ENCODE measurements at regions of chr22 and their contacts with region 1.

Region 1: GRCh38 chr22:39170825-39171622 is 18.5 kb upstream of the CBX7 start:
- DNase-seq: peak; percentile 89
- H3K4me3 Mint-ChIP-seq: peak overlapping the region; percentile 60
- H3K27ac Mint-ChIP-seq: peak overlapping the region; percentile 57
- H3K4me1 Mint-ChIP-seq: peaks cover 37% of the 10 kb centered on the region
- H3K27me3 Mint-ChIP-seq: no peaks in the 10 kb centered on the region

Region 2: GRCh38 chr22:39215426-39216120 is 44.5 kb after region 1 on chr22:
- CTCF ChIA-PET with region 1: interaction called, 11 read pairs
- intact Hi-C with region 1: no loop called
- DNase-seq: peak; percentile 52
- H3K4me3 Mint-ChIP-seq: no peak overlapping the region
- H3K27ac Mint-ChIP-seq: no peak overlapping the region
- H3K4me1 Mint-ChIP-seq: peaks cover 5% of the 10 kb centered on the region
- H3K27me3 Mint-ChIP-seq: peaks cover 10% of the 10 kb centered on the region

Region 3: DNA sequence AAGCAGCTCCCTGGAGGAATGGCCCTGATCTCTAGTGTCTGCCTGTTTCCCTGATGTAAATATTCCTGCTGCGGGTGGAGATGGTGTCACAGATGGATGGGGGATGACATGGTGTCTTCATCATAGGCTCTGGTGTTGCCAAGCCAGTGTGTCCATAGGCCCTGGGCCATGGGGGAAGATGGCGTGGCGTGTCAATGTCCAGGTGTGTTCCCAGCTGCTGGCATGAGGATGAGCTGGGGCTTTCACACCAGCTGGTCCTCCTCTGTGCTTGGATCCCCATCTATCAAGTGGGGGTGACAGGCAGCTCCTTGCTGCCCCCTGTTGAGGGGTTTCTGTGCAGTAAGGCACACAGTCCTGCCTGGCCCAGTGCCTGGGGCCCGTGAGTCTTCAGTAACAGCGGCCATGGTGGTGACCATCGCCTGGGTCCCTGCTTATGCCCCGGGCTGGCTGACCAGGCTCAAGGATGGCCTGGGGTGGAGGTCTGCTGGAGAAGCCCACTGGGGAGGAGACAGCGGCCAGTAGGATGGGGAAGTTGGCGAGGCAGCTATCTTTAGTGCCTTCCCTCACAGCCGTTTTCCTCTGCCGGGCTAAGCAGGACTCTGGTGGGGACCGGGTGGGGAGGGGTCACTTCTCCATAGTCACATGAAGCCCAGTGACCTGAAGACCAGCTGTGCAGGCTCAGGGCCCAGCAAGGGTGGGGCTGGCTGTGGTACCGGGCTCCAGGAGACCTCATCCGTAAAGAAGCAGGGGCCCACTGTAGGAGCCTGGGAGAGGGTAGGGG is 135.7 kb after region 1 on chr22:
- CTCF ChIA-PET with region 1: interaction called, 97 read pairs
- intact Hi-C with region 1: loop called (anchors 1 kb)
- DNase-seq: peak; percentile 78
- H3K4me3 Mint-ChIP-seq: no peak overlapping the region
- H3K27ac Mint-ChIP-seq: no peak overlapping the region
- H3K4me1 Mint-ChIP-seq: no peaks in the 10 kb centered on the region
- H3K27me3 Mint-ChIP-seq: no peaks in the 10 kb centered on the region

Region 4: GRCh38 chr22:39319270-39320022 is 148.4 kb after region 1 on chr22 and contains the start of gene RPL3:
- CTCF ChIA-PET with region 1: interaction called, 36 read pairs
- intact Hi-C with region 1: no loop called
- DNase-seq: peak; percentile 94
- H3K4me3 Mint-ChIP-seq: peak within 1 kb of the TSS; percentile 99
- H3K27ac Mint-ChIP-seq: peak within 1 kb of the TSS; percentile 100
- H3K4me1 Mint-ChIP-seq: peaks cover 42% of the 10 kb centered on the region
- H3K27me3 Mint-ChIP-seq: no peaks in the 10 kb centered on the region
- total RNA-seq, gene RPL3: 3,434 to 3,511 TPM